ENCODE measurements at regions of chr12 and their contacts with region 1.

Region 1: DNA sequence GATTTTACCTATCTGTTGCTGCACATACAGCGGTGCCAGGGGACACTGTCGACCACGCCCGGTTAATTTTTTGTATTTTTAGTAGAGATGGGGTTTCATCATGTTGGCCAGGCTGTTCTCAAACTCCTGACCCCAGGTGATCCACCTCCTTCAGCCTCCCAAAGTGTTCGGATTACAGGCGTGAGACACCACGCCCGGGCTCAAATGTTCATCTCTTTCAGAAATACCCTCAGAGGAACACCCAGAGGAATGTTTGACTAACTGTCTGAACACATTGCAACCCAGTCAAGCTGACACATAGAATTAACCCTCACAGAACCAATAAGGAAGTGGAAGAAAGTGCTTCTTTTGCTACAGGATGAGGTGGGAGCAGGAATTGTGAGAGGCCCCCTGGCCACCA is 15.0 kb upstream of the ETFBKMT start:
- DNase-seq: no peak
- ATAC-seq: no peak
- H3K4me3 ChIP-seq: no peak overlapping the region
- H3K27ac ChIP-seq: no peak overlapping the region
- H3K4me1 ChIP-seq: no peaks in the 10 kb centered on the region
- H3K27me3 ChIP-seq: no peaks in the 10 kb centered on the region
- CTCF ChIP-seq: no peak

Region 2: GRCh38 chr12:31371256-31371620 is 273.3 kb before region 1 on chr12:
- CTCF ChIA-PET with region 1: no interaction called
- POLR2A ChIA-PET with region 1: interaction called, 10 read pairs
- in situ Hi-C with region 1: no loop called
- intact Hi-C with region 1: no loop called
- DNase-seq: no peak
- ATAC-seq: peak; percentile 15; the same call in 1 of the 2 replicates
- H3K4me3 ChIP-seq: no peak overlapping the region
- H3K27ac ChIP-seq: peak overlapping the region; percentile 82; the same call in 1 of the 2 replicates
- H3K4me1 ChIP-seq: peaks cover 26% of the 10 kb centered on the region
- H3K27me3 ChIP-seq: no peaks in the 10 kb centered on the region
- CTCF ChIP-seq: no peak